Posterior vena cava (tissue), 2 donors: ENCODE measurements at regions of chr1 and their contacts with region 1.

Region 1: DNA sequence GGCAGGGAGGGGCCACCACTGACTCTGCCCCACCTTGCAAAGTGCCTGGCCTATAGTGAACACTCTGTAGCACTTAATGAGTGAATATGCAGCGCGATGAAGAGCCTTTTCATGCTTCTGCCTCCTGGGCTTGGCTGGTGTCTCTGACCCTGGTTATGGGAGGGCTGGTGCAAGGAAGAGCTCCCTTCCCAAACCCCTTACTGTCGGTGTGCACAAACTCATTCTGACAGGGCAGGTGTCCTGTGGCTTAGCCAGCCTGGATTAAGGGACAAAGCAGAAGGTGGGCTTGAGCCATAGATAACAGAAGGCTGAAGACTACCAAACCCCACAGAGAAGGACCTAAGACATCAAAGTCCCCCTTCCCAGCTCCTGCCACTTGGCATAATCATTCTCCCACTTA is 2.0 kb upstream of the NCMAP start:
- DNase-seq: no peak

Region 2: DNA sequence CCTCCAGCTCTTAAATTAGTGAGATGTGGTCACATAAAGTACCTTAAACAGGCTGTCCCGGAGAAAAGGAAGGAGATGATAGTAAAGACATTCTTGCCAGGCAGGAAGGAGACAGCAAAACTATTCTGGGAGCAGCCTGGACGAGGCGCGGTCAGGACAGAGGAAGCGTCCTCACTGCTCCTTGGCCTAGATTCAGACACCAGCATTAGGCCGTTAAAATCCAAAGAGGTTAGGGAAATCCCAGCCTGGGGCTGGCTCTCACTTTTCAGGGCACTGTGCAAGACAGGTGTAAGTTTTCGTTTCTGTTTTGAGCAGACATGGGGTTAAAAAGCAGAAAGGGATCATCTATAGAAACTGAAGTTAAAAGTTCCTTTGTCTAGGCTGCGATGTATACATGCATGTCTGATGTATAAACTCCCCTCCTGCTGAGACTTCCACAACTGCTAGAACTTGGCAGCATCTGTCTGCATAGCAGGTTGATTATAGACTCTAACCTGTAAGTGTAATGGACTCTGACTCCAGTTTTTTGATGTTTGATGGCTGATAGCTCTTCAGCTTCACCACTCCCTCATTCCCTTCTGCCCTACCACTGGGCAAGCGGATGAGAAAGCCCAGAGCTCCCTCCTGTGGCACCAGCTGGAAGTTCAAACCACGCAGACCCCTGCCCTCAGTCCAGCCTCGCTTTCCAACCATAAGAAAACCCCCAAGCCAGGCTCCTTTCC is 161.9 kb before region 1 on chr1:
- intact Hi-C with region 1: no loop called
- DNase-seq: no peak

Region 3: DNA sequence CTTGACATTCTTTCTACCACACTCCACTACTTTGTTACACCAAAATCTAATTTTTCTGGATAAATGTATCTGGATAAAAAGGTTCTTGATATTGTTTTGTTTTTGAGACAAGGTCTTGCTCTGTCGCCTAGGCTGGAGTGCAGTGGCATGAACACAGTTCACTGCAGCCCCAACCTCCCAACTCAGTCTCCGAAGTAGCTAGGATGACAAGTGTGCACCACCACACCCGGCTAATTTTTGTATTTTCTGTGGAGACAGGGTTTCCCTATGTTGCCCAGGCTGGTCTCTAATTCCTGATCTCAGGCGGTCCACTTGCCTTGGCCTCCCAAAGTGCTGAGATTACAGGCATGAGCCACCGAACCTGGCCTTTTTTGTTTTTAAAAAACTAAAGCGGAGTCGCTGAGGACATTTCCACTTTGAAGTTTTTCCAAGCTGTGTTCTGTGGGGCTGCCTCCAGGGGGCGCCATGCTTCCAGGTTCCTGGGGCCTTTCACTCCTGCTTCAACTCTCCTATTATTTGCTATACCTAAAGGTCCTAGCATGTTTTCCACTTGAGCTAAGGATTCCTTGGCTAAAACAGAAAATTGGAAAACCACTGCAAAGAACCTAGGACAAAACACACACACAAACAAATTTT is 12.1 kb before region 1 on chr1:
- intact Hi-C with region 1: loop called in 1 of 2 experiments (anchors 1 kb)
- DNase-seq: no peak

Region 4: DNA sequence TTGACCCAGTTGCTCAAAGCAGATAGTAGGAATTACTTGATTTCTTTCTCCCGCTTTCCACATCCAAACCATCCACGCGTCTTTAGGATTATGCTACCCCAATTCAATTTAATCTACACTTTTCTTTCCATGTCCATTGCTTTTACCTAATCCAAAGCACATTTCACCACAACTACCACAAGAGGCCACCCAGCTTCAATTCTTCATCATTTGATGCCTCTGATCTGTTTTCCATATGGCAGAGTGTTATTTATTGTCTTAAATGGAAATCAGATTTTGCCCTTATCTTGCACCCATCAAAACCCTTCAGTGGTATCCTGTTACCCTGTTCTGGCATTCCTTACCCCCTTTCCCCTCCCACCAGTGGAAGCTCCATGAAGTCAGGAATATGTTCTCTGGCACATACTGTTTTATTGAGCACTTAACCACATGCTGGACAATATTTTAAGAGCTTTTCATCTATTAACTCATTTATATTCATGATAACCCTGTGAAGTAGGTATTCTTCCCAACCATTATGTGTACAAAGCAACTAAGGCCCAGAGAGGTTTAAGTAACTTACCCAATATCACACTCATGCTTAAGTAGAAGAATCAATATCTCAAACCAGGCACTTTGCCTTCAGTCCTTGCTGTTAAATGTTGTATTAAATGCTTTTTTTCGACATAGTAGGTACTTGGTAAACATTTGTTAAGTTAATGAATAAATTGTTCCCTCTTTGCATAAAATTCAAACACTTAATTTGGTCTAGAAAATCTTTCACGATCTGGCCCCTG is 225.9 kb after region 1 on chr1:
- intact Hi-C with region 1: no loop called
- DNase-seq: no peak